PC-9 (cell line): ENCODE measurements at regions of chr1 and their contacts with region 1.

Region 1: GRCh38 chr1:220281159-220281574 is 8.9 kb upstream of the RAB3GAP2 start:
- DNase-seq: peak in 1 of 2 experiments; percentile 64
- H3K4me3 ChIP-seq: no peak overlapping the region
- H3K27ac ChIP-seq: no peak overlapping the region
- H3K4me1 ChIP-seq: no peaks in the 10 kb centered on the region
- H3K27me3 ChIP-seq: no peaks in the 10 kb centered on the region
- CTCF ChIP-seq: peak; percentile 84

Region 2: DNA sequence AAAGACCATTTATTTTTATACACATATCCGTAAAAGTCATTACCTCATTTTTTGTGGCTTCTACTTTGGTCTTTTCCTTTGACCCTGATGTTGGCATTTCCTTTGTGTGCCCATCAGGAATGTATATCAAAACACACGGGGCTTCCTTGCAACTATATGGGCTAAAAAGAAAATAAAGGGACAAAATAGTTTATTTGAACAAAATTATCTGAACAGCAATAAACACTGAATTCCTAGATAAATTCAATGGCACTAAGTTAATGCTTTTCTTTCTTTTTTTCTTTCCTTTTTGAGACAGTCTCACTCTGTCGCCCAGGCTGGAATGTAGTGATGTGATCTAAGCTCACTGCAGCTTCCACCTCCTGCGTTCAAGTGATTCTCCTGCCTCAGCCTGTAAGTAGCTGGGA is 280.1 kb before region 1 on chr1:
- CTCF ChIA-PET with region 1: no interaction called
- POLR2A ChIA-PET with region 1: no interaction called
- intact Hi-C with region 1: no loop called
- DNase-seq: no peak
- H3K4me3 ChIP-seq: no peak overlapping the region
- H3K27ac ChIP-seq: no peak overlapping the region
- H3K4me1 ChIP-seq: no peaks in the 10 kb centered on the region
- H3K27me3 ChIP-seq: no peaks in the 10 kb centered on the region
- CTCF ChIP-seq: no peak

Region 3: GRCh38 chr1:220243947-220244346 is 37.2 kb before region 1 on chr1:
- CTCF ChIA-PET with region 1: no interaction called
- POLR2A ChIA-PET with region 1: no interaction called
- intact Hi-C with region 1: no loop called
- DNase-seq: no peak
- H3K4me3 ChIP-seq: no peak overlapping the region
- H3K27ac ChIP-seq: no peak overlapping the region
- H3K4me1 ChIP-seq: no peaks in the 10 kb centered on the region
- H3K27me3 ChIP-seq: no peaks in the 10 kb centered on the region
- CTCF ChIP-seq: no peak

Region 4: GRCh38 chr1:220326578-220326977 is 45.4 kb after region 1 on chr1:
- CTCF ChIA-PET with region 1: no interaction called
- POLR2A ChIA-PET with region 1: interaction called, 18 read pairs
- intact Hi-C with region 1: no loop called
- DNase-seq: peak; percentile 77 to 81
- H3K4me3 ChIP-seq: no peak overlapping the region
- H3K27ac ChIP-seq: peak overlapping the region; percentile 49; the same call in 1 of the 2 replicates
- H3K4me1 ChIP-seq: peaks cover 16% of the 10 kb centered on the region
- H3K27me3 ChIP-seq: no peaks in the 10 kb centered on the region
- CTCF ChIP-seq: no peak

Region 5: GRCh38 chr1:220680085-220680687 is 399.0 kb after region 1 on chr1:
- CTCF ChIA-PET with region 1: interaction called, 4 read pairs
- POLR2A ChIA-PET with region 1: no interaction called
- intact Hi-C with region 1: loop called (anchors 2 kb)
- DNase-seq: peak in 1 of 2 experiments; percentile 21
- H3K4me3 ChIP-seq: no peak overlapping the region
- H3K27ac ChIP-seq: no peak overlapping the region
- H3K4me1 ChIP-seq: no peaks in the 10 kb centered on the region
- H3K27me3 ChIP-seq: no peaks in the 10 kb centered on the region
- CTCF ChIP-seq: peak; percentile 85

Region 6: DNA sequence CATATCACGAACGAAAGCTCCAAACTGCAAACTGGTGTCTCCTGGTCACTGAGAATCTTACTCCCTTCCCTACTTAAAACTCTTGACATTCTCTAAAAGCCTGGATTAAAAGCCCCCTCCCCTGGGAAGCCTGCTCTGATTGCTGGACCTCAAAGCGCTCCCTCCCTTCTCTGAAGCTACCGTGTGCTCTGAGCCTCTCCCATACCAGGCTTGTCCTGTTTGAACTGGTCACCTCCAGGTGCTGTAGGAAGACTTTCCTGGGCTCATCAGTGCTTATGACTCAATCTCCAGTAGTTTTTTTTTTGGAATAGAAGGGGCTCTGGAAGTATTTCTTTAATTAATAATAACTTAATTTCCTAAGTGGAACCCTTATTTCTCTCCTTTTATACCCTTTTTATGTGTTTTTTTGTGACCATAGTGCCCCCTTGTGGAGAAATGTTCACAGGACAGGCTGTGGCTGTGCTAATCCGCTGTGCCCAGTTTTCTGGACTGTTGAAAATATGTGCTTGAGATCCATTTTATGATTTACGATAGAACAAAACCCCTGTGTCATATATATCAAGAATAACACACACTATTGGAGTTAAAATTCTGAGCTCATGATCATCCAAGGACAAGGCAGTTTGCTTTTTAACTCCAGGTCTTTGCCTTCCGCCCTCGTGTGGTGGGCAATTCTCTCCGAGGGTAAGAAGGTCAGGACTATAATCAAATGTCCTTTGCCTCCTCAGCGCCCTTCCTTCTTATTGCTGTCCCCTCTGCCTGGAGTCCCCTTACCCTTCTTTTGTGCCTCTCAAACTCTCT is 522.4 kb after region 1 on chr1:
- CTCF ChIA-PET with region 1: interaction called, 3 read pairs
- POLR2A ChIA-PET with region 1: no interaction called
- intact Hi-C with region 1: loop called (anchors 1 kb)
- DNase-seq: peak in 1 of 2 experiments; percentile 44
- H3K4me3 ChIP-seq: no peak overlapping the region
- H3K27ac ChIP-seq: no peak overlapping the region
- H3K4me1 ChIP-seq: peaks cover 3% of the 10 kb centered on the region
- H3K27me3 ChIP-seq: no peaks in the 10 kb centered on the region
- CTCF ChIP-seq: peak; percentile 92